ENCODE measurements at regions of chr1 and their contacts with region 1.

Region 1: DNA sequence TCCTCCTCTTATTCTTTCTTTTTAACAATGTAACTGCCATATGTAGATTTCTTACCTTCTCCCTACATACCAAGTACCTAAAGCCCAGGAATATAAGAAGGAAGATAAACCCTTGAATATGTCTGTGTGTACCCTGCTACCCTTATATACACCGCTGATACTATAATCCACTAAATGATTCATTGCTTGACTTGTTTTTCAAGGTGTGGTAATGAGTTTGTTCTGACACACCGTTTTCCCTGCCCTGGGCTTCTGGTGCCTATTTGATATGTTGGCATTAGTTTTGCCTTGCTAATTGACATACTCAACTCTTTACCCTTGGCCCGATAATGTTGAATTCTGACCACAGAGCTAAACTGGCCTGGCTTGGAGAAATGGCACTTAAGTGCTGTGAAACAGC is 64.3 kb downstream of the IL23R start:
- DNase-seq: no peak
- ATAC-seq: no peak

Region 2: GRCh38 chr1:67500413-67500959 is 269.9 kb after region 1 on chr1:
- intact Hi-C with region 1: loop called in 1 of 2 experiments (anchors 1 kb)
- DNase-seq: peak; percentile 84
- ATAC-seq: peak; percentile 97 to 98

Measured in left cardiac atrium (tissue), 4 donors.